HCT116 (cell line): ENCODE measurements at regions of chr2 and their contacts with region 1.

Region 1: DNA sequence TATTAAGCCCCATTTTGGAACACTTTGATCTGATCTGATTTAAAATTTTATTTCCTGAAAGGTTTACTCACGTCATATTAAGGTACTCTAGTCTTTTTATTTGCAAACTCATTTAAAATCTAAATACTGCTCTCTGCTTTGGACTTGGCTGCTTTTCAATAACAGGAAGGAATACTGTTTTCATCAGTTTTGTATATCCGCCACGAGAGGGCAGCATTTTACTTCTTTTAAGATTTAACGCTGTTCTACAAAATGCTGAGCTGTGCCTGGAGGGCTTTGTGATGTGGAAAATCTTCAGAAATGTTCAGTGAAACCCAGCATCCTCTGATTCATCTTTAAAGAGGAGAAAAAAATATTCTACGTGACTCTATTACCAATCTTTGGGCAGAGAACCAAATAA is 37.5 kb upstream of the SLC38A11 start:
- DNase-seq: peak; percentile 58
- ATAC-seq: peak; percentile 76
- H3K4me3 ChIP-seq: no peak overlapping the region
- H3K27ac ChIP-seq: no peak overlapping the region
- H3K4me1 ChIP-seq: no peaks in the 10 kb centered on the region
- H3K27me3 ChIP-seq: no peaks in the 10 kb centered on the region
- CTCF ChIP-seq: peak; percentile 24 to 56 (median 47); a peak in 4 of 6 replicates
- POLR2A ChIP-seq: no peak
- RAD21 ChIP-seq: peak; percentile 69

Region 2: GRCh38 chr2:164220265-164220664 is 772.6 kb before region 1 on chr2:
- CTCF ChIA-PET with region 1: no interaction called
- POLR2A ChIA-PET with region 1: no interaction called
- RAD21 ChIA-PET with region 1: no interaction called
- intact Hi-C with region 1: no loop called
- DNase-seq: no peak
- ATAC-seq: no peak
- H3K4me3 ChIP-seq: no peak overlapping the region
- H3K27ac ChIP-seq: no peak overlapping the region
- H3K4me1 ChIP-seq: no peaks in the 10 kb centered on the region
- H3K27me3 ChIP-seq: no peaks in the 10 kb centered on the region; the same call in 1 of the 2 replicates
- CTCF ChIP-seq: no peak
- POLR2A ChIP-seq: no peak
- RAD21 ChIP-seq: no peak

Region 3: DNA sequence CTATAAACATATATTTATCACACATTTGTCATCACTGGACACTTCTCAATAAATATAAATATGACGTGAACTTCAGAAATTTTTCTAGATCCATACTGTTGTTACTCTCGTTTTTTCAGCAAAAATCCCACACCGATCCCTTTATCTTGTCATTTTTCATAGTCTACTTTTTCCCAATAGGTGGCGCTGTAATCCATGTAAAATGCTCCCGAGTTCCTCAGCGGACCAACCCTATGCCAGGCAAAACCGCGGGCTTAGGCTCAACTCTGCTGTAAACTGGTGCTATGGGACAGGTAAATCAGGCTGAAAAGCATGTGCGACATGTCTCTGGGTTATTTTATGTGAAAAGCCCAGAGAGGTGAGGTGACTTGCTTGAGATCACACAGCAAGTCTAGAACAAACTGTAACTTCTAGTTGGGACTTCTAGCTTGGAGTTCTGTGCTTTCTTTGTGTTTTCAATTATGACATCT is 255.2 kb before region 1 on chr2:
- CTCF ChIA-PET with region 1: interaction called, 4 read pairs
- POLR2A ChIA-PET with region 1: no interaction called
- RAD21 ChIA-PET with region 1: no interaction called
- intact Hi-C with region 1: loop called (anchors 5 kb)
- DNase-seq: peak; percentile 73
- ATAC-seq: peak; percentile 94
- H3K4me3 ChIP-seq: no peak overlapping the region
- H3K27ac ChIP-seq: no peak overlapping the region
- H3K4me1 ChIP-seq: peaks cover 0 to 20% of the 10 kb centered on the region in 2 experiments; a peak in 3 of 4 replicates
- H3K27me3 ChIP-seq: no peaks in the 10 kb centered on the region
- CTCF ChIP-seq: peak; percentile 57 to 90 (median 81)
- POLR2A ChIP-seq: no peak
- RAD21 ChIP-seq: peak; percentile 92

Region 4: DNA sequence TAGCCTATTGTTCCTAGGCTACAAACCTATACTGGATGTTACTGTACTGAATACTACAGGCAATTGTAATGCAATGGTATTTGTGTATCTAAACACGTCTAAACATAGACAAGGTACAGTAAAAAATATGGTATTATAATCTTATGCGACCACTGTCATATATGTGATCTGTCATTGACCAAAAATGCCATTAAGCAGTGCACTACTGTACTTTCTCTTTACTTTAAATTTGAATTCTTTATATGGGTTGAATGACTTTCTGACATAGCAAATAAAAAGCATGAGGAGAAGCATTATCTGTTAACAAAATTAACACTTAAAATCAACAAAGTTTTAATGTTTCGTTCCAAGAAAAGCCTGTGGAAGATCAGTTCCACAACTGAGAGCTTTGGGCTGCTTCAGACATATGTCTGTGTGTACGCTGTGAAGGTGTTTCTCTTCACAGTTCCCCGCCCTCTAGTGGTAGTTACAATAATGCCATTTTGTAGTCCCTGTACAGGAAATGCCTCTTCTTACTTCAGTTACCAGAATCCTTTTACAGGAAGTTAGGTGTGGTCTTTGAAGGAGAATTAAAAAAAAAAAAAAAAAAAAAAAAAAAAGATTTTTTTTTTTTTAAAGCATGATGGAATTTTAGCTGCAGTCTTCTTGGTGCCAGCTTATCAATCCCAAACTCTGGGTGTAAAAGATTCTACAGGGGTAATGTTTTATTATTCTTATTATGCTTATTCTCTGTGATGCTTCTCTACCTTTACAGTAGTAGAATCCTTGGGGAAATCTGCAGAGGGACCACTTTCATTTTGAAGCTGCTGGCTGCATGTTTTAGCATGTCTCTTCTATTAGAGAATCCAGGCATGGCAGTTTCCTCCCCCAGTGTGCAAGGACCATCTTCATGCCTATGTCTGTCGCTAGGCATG is 300.9 kb after region 1 on chr2:
- CTCF ChIA-PET with region 1: interaction called, 5 read pairs
- POLR2A ChIA-PET with region 1: no interaction called
- RAD21 ChIA-PET with region 1: interaction called in 1 of 2 experiments, 3 read pairs
- intact Hi-C with region 1: loop called (anchors 5 kb)
- DNase-seq: peak; percentile 79
- ATAC-seq: peak; percentile 100
- H3K4me3 ChIP-seq: no peak overlapping the region
- H3K27ac ChIP-seq: no peak overlapping the region
- H3K4me1 ChIP-seq: no peaks in the 10 kb centered on the region
- H3K27me3 ChIP-seq: no peaks in the 10 kb centered on the region
- CTCF ChIP-seq: peak; percentile 58 to 77 (median 71)
- POLR2A ChIP-seq: no peak
- RAD21 ChIP-seq: peak; percentile 53

Region 5: GRCh38 chr2:165874445-165875039 is 881.7 kb after region 1 on chr2:
- CTCF ChIA-PET with region 1: interaction called, 12 read pairs
- POLR2A ChIA-PET with region 1: no interaction called
- RAD21 ChIA-PET with region 1: no interaction called
- intact Hi-C with region 1: no loop called
- DNase-seq: peak; percentile 28
- ATAC-seq: peak; percentile 84
- H3K4me3 ChIP-seq: no peak overlapping the region
- H3K27ac ChIP-seq: no peak overlapping the region
- H3K4me1 ChIP-seq: no peaks in the 10 kb centered on the region
- H3K27me3 ChIP-seq: no peaks in the 10 kb centered on the region
- CTCF ChIP-seq: peak; percentile 58 to 63 (median 59); a peak in 5 of 6 replicates
- POLR2A ChIP-seq: no peak
- RAD21 ChIP-seq: peak; percentile 78